GM18951 (cell line): ENCODE measurements at regions of chr7 and their contacts with region 1.

Region 1: GRCh38 chr7:148014541-148014940 is 576.0 kb upstream of the C7orf33 start:
- POLR2A ChIP-seq: no peak

Region 2: DNA sequence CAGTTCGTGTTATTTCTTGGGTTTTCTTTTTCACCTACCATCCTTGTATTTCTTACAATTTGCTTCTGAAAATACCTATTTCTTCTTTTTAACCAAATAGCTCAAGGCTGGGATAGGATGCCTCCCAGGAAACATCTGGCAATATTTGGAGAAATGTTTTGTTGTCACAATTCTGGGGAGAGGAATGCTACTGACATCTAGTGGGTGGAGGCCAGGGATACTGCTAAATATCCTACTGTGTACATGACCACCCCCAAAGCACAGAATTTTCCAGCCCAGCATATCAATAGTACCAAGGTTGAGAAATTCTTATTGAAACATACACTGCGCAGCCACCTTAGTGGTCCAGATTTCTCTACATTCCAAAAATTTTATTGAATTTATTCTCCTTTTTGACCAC is 1842.4 kb before region 1 on chr7:
- in situ Hi-C with region 1: loop called (anchors 10 kb)
- POLR2A ChIP-seq: no peak

Region 3: DNA sequence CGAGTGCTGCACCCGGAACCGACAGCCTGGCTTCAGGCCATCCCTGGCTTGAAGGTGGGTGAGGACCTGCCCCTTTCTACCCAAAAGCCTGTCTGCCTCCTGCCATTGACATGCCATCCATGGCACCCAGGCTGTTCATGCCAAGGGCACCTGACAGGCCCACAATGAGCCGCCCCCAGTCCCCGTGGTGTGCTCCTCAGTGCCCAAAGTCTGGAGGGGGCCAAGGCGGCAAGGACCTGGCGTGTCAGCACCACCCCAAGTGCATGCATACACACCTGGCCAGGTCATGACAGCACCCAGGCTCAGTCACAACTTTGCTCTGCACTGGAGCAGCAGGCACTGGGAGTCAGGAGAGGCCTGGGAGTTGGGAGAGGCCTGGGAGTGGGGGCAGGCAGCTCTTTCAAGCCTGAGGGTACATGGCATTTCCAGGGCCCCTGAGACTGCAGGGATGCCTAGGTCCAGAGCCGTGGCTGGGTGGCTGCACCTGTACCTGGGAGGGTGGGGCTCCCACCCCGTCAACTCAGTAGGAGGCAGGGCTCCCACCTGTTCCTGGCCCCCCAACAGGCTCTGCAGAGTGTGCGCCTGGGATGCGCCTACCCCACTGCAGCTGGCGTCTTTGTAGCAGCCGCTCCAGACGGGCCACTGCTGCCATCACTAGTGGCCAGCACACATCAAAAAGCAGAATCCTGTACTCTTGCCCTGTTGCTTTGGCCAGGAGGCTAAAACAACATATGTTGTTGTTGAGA is 1687.1 kb after region 1 on chr7:
- in situ Hi-C with region 1: no loop called
- POLR2A ChIP-seq: no peak